Right ventricle myocardium superior (tissue), 1 donor: ENCODE measurements at regions of chr17 and their contacts with region 1.

Region 1: DNA sequence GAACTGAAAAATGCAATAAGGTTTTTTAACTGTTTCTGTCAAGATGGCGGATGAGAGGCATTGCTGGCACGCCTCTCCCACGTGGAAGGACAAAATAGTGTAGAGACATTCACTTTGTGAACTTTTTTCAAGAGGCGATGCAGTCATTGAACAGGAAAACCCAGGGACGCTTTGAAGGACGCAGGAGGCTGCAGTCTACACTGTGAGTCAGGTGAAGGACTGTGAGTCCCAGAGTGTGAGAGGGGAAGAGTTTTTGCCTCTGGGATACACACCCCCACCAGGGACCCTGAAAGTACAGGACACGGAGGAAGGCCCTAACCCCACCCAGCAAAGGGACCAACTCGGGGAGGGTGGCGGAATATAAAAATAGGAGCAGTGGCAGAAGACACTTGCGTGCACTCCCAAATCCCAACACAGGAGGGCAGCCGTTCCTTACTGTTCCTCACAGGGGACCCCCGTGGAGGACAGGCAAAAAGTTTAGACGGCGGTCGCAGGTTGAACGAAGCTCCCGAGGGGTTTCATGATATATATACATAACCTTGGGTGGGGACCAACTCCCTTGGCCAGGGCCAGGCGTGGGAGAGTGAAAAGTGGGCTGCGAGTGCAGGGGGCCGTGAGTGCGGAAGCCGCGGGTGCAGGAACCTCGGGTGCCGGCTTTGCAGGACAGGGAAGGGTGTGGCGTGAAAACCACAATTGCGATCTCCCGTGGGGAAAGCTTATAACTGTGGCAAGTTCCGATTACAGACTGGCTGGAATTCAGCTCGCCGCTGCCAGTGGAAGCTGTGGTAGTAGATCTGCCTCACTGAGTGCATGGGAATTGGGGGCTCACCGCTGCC is 82.0 kb upstream of the ALOX12 start:
- DNase-seq: peak; percentile 84
- ATAC-seq: peak; percentile 92

Region 2: DNA sequence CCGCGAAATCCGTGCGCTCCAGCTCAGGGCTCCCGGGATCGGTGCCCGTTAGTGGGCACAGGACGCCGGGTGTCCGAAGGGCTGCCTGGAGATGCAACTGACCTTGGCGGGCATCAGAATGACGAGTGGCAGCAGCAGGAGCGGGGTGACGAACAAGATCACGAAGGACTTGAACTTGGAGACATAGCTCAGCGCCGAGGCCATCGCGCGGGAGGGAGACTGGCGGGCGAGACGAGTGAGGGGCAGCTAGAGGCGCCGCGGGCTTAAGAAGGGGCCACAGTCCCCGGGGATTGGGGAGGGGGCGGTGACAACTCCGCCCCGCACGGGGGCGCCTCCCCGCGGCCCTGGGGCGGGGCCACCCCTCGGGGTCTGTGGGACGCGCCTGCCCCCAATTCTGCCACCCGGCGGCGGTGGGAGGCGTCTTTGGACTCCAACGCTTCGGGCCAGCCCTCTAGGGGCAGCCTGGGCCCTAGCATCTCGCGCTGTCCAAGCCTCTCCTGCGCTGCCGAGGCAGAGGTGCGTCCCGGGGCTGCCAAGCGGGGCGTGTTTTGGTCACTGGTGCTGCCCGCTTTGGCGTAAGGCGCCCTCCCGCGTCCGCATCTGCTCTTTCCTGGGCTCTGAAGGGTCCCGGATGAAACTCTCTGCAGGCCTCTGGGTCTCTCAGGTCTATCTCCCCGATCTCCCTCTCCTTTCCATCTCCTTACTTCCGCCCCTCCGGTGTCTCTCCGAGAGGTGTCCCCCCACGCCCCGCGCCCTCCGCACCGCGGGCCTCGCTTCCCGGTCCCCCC is 200.5 kb before region 1 on chr17 and contains the start of gene SLC13A5:
- intact Hi-C with region 1: no loop called
- DNase-seq: no peak
- ATAC-seq: peak; percentile 39
- total RNA-seq, gene SLC13A5: not detected

Region 3: GRCh38 chr17:6800422-6801027 is 113.3 kb before region 1 on chr17:
- intact Hi-C with region 1: no loop called
- DNase-seq: no peak
- ATAC-seq: no peak

Region 4: GRCh38 chr17:7004398-7005253 is 90.8 kb after region 1 on chr17:
- intact Hi-C with region 1: loop called (anchors 5 kb)
- DNase-seq: no peak
- ATAC-seq: peak; percentile 63

Region 5: DNA sequence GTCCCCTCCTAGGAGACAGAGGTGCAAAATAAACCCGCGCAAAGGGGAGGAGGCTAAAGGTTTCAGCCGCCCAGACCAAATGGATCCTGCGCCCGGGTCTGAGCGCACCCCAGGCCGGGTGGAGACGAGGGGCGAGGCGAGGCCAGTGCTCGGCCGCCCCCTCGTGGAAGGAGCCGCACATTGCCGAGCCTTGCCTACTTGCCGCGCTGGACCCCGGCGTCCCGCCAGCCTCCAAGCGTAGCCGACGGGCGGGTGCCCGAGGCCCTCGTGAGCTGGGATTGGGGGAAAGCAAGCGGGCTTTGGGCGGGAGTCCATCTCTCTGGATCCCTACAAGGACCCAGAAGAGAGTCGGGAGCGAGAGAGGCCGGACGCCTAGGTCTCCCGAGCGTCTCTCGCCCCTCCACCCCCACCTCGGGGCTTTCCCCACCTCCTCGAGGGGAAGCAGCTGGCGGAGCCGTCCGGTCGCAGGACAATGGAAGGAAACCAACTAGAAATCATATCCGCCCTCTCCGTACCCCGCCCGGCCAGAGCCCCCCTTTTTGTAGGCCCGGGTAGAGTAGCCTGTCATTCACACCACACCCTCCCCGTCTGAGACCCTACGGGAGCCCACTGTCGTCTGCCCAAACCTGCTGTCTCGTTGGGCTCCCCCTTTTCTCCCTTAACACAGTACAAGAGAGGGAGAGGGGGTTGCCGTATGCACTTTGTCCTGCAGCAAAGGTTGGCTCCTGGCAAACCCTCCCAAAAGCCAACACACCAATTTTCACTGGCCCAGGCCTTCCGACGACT is 108.4 kb after region 1 on chr17:
- intact Hi-C with region 1: loop called (anchors 5 kb)
- DNase-seq: peak; percentile 91
- ATAC-seq: peak; percentile 74